Left cardiac atrium (tissue), 4 donors: ENCODE measurements at regions of chr7 and their contacts with region 1.

Region 1: DNA sequence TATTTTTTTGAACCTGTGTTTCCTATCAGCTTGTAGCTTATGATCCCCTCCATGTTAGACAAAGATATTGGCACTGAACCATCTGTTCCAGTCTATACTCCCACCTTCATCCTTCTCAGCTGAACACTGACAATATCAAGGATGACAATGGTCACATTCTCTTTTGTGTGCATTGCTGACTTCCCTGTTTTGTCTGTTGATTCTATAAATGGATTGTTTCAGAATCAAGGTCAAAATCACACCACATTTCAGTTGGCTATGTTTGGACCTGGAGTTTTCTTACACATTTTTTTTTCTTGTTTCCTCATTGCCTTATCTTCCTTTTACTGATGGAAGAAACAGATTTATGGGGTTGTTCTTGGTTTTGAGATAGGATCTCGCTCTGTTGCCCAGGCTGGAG is 11.3 kb upstream of the SMURF1 start:
- DNase-seq: no peak
- ATAC-seq: no peak

Region 2: GRCh38 chr7:99312316-99313203 is 157.3 kb after region 1 on chr7:
- intact Hi-C with region 1: loop called in 1 of 2 experiments (anchors 10 kb)
- DNase-seq: peak; percentile 66
- ATAC-seq: peak; percentile 70 to 81